Posterior cingulate gyrus (tissue), 11 donors: ENCODE measurements at regions of chr11 and their contacts with region 1.

Region 1: DNA sequence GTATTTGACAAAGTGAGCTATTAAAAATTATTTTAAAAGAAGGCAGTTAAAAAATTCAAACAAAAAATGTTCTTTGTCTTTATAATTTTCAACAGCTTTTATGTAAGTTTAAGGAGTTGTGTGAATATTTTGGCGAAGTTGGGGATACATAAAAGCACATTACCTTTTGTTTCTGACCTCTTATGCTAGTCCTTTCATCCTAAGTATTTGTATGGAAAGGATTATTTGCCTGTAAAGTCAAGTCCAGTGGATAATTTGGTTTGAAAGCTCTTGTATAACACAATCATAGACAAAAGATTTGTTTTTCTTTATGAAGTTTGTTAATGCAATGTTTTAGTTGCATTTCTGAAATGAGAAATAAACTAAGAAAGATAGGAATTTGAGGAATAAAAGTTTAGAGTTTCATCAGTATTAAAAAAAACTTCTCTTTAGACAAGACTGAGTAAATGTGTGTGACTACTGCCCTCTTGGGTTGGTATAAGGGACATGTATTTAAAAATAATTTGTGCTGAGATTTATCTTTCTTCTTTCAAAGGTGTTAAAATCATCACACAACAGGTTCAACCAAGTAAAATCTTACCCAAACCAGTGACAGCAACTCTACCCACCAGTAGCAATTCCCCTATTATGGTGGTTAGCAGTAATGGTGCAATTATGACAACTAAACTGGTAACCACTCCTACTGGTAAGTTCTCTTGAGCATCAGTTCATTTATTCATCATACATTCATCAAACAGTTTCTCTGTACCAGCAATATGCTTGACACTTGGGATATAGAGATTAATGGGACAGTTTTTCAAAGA is 68.2 kb downstream of the EMSY start:
- DNase-seq: no peak

Region 2: GRCh38 chr11:76207642-76208401 is 305.2 kb before region 1 on chr11:
- intact Hi-C with region 1: loop called (anchors 5 kb)
- DNase-seq: peak; percentile 43 to 96 (median 71)